PC-9 (cell line): ENCODE measurements at regions of chr7 and their contacts with region 1.

Region 1: GRCh38 chr7:2771274-2771731 is 72.8 kb downstream of the GNA12 start:
- DNase-seq: no peak
- H3K4me3 ChIP-seq: no peak overlapping the region
- H3K27ac ChIP-seq: no peak overlapping the region
- H3K4me1 ChIP-seq: peaks cover 39% of the 10 kb centered on the region
- H3K27me3 ChIP-seq: no peaks in the 10 kb centered on the region
- CTCF ChIP-seq: no peak

Region 2: DNA sequence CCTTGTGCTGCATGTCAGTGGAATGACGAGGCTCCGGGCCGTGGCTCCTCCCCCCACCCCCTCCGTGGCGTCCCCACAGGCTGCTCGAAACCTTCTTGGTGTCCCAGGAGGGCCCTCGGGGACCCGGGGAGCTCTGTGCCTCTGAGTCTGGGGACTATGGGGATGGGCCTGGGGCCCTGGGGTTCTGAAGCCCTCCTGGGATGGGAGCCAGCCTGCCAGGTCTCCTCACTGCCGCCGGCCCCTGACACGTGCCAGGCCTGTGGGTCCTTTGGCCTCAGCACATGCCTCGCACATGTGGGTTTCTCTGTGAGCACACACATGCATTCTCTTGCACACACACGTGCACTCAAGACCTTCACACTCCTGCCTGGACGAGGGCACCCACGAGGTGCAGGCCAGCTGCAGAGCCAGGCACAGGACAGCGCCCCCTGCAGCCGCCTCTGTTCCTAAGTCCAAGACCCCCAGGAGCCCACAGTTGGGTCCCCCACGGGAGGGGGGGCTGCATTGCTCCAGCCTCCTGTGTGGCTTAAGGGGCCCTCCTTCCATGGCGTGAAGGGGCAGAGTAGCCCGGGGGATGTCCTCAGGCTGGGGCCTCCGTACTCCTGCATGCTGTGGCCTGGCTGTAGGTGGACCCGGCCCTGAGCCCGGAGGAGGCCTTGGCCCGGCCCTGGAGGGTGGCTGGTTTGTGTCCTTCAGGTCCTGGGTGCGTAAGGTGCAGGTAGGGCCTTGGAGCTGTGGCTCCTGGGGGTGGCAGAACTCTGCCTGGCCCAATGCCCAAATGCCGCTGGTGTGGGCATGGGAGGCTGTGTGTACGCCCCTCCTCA is 110.5 kb before region 1 on chr7:
- CTCF ChIA-PET with region 1: interaction called, 12 read pairs
- POLR2A ChIA-PET with region 1: no interaction called
- intact Hi-C with region 1: no loop called
- DNase-seq: no peak
- H3K4me3 ChIP-seq: no peak overlapping the region
- H3K27ac ChIP-seq: no peak overlapping the region
- H3K4me1 ChIP-seq: no peaks in the 10 kb centered on the region
- H3K27me3 ChIP-seq: no peaks in the 10 kb centered on the region
- CTCF ChIP-seq: peak; percentile 41; the same call in 1 of the 2 replicates

Region 3: GRCh38 chr7:2751086-2751485 is 20.2 kb before region 1 on chr7:
- CTCF ChIA-PET with region 1: no interaction called
- POLR2A ChIA-PET with region 1: interaction called, 11 read pairs
- intact Hi-C with region 1: no loop called
- DNase-seq: no peak
- H3K4me3 ChIP-seq: no peak overlapping the region
- H3K27ac ChIP-seq: no peak overlapping the region
- H3K4me1 ChIP-seq: peaks cover 8% of the 10 kb centered on the region
- H3K27me3 ChIP-seq: no peaks in the 10 kb centered on the region
- CTCF ChIP-seq: no peak

Region 4: DNA sequence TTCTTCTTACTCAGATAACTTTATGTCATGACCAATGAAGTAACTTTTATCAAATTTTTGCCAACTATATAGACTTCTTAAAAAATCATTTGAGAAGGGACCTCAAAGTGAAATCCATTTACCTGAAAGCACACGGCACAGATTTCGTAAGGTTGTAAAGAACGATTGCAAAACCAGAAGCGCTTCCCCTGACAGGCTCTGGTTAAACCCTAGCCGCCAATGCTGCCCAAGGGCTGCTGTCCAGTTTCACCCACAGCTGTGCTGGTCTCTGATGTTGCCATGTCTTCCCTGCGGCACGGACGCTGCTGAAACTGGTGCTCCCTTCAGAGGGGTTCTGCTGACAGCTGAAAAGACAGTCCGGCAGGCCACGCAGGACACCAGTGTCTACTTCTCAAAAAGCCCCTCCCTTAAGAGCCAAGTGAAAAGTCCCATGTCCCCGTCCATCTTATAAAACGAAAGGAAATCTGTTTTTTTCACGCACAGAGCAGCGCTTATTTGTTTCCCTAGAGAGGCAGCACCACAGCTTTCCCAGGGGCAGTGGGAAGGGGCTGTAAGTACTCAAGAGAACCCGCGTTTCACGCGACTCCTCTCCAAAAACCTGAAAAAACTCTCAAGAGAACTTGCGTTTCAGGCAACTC is 40.3 kb after region 1 on chr7:
- CTCF ChIA-PET with region 1: no interaction called
- POLR2A ChIA-PET with region 1: no interaction called
- intact Hi-C with region 1: no loop called
- DNase-seq: peak in 1 of 2 experiments; percentile 73
- H3K4me3 ChIP-seq: no peak overlapping the region
- H3K27ac ChIP-seq: peak overlapping the region; percentile 54
- H3K4me1 ChIP-seq: peaks cover 79% of the 10 kb centered on the region
- H3K27me3 ChIP-seq: no peaks in the 10 kb centered on the region
- CTCF ChIP-seq: no peak

Region 5: DNA sequence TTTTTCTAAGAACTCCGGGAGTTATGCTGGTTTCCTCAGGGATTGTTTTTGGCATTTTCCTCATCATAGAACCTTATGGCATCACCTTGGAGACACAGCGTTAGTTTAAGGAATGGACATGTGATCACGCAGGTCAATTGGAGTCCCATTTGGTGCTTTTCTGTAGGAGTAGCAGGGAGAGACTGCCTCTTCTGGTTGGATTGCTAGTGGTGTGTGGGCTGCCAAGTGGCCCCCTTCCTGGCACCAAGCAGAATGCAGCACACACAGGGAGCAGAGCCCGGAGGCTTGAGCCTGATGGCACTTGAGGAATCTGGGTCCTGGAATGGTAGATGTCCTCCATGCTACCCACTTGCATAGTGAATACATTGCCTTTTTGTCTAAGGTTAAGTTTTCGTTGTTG is 587.7 kb after region 1 on chr7:
- CTCF ChIA-PET with region 1: no interaction called
- POLR2A ChIA-PET with region 1: no interaction called
- intact Hi-C with region 1: no loop called
- DNase-seq: no peak
- H3K4me3 ChIP-seq: no peak overlapping the region
- H3K27ac ChIP-seq: no peak overlapping the region
- H3K4me1 ChIP-seq: no peaks in the 10 kb centered on the region
- H3K27me3 ChIP-seq: peaks cover 81% of the 10 kb centered on the region
- CTCF ChIP-seq: no peak

Region 6: DNA sequence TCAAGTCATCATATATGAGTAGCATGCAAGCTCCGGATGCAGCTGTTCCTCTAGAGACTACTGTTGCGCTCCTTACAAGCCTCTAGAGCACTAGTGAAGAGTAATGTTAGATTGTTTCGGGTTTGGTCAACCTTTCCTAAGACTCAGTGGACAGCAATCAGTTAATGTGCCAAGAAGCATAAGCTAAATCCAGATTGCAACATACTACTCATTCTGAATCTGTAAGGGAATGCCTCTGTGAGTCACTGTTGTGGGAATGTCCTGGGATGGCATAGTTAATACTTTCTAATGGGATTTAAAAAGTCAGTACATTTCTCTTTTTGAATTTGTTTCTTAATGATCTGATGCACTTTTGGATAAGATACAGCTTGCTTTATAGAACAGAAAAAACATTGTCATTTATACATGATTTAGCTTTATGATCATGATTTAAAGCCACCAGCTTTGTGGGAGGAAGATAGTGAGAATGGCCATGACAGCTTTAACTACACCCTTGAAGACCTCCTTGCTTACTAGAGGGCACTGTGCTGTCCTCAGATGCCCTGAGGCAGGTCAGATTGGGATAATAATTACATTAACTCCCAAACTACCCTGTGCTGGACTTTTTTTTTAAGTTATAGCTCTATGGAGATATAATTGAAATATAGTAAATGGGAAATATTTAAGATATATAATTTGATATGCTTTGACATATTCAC is 668.2 kb after region 1 on chr7:
- CTCF ChIA-PET with region 1: no interaction called
- POLR2A ChIA-PET with region 1: no interaction called
- intact Hi-C with region 1: no loop called
- DNase-seq: peak in 1 of 2 experiments; percentile 76
- H3K4me3 ChIP-seq: no peak overlapping the region
- H3K27ac ChIP-seq: no peak overlapping the region
- H3K4me1 ChIP-seq: peaks cover 10% of the 10 kb centered on the region
- H3K27me3 ChIP-seq: peaks cover 22% of the 10 kb centered on the region
- CTCF ChIP-seq: no peak